ENCODE measurements at regions of chr9 and their contacts with region 1.

Region 1: DNA sequence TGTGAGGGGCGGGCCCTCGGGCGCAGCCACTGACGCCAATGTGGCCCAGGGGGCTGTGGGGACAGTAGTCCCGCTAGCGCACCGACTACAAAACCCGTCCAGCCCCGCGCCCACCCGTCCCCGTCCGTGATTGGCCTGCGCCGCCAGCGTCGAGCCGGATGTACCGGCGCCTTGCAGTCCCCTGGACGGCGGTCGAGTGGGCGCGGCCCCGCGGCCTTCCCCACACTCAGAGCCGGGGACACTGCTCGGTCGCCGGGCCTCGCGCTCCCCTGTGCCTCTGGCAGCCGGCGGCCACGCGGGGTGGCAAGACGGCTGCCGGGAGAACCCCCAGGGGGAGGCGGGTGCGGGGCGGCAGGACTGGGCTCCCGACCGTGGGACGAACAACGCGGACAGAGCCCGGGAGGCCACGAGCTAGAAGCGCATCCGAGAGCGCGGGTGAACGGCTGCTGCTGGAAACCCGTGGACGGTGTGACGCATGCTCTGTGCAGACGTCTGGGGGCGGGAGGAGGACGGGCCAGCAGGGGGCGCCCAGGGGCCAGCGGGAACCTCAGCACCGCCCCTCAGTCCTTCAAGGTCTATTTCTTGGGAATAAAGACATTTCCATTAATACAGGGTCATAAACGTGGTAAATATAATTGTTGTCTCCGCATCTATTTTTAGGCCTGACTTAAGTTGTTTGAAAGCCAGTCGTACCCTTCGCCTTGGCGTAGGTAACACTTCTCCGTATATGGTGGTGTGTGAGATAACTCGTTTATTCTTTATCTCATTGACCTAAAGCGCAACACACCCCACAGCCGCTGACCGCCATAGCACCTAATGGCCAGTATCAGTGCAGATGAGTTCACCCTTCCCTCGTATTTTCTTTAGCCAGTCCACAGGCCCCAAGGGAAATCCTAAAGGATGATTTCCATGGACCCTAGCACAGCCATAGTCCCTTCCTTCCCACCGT is 629 bp upstream of the BICD2 start:
- H3K4me3 ChIP-seq: peak overlapping the region; percentile 84
- H3K27ac ChIP-seq: peak overlapping the region; percentile 89
- H3K4me1 ChIP-seq: no peaks in the 10 kb centered on the region; the same call in 1 of the 2 replicates
- CTCF ChIP-seq: peak; percentile 92

Region 2: GRCh38 chr9:92669890-92670708 is 95.2 kb before region 1 on chr9 and contains the start of gene IPPK:
- CTCF ChIA-PET with region 1: interaction called, 3 read pairs
- POLR2A ChIA-PET with region 1: interaction called, 15 read pairs
- H3K4me3 ChIP-seq: peak within 1 kb of the TSS; percentile 96
- H3K27ac ChIP-seq: peak within 1 kb of the TSS; percentile 51; the same call in 1 of the 2 replicates
- H3K4me1 ChIP-seq: no peaks in the 10 kb centered on the region; the same call in 1 of the 2 replicates
- CTCF ChIP-seq: no peak

Measured in HEK293 (cell line).